ENCODE measurements at regions of chr9 and their contacts with region 1.

Region 1: DNA sequence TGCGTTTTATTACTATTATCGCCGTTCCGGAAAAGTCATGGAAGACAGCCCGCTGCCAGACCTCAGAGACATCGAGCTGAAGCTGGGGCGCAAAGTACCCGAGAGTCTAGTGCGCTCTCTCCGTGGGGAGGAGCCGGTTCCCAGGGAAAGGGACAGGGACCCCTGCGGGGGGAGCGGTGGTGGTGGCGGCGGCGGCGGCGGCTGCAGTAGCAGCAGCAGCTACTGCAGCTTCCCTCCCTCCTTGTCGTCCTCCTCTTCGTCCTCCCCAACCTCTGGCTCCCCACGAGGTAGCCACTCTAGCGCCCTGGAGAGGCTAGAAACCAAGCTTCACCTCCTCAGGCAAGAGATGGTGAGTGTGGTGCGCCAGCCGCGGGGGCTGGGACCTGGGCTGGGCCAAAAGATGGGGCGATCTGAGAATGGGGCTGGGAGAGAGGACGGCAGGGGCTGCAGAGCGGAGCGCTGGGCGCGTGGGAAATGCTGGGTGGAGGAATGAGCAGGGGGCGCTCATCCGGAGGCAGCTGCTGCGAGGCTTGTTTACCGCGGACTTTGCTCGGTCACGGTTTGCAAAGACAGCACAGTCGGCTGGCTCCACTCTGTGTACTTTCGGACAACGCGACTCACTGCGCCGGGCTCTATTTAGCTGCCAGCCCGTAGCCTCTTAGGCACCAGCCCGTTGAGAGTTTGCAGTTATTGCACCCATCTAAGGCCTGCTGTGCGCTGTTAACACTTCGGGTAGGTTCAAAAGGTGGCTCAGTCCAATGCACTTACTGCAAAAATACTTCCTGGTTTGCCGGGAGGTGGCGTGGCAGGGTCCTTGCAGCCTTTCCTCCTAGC is 1.1 kb downstream of the LURAP1L start:
- DNase-seq: peak; percentile 67
- H3K4me3 ChIP-seq: peak overlapping the region; percentile 76 to 89 (median 82)
- H3K27ac ChIP-seq: peak overlapping the region; percentile 89 to 97 (median 94)
- H3K4me1 ChIP-seq: peaks cover 0 to 38% (median 23%) of the 10 kb centered on the region in 4 donors
- H3K27me3 ChIP-seq: no peaks in the 10 kb centered on the region
- CTCF ChIP-seq: peak; percentile 48 to 59 (median 54)
- EP300 ChIP-seq: no peak
- POLR2A ChIP-seq: no peak

Region 2: DNA sequence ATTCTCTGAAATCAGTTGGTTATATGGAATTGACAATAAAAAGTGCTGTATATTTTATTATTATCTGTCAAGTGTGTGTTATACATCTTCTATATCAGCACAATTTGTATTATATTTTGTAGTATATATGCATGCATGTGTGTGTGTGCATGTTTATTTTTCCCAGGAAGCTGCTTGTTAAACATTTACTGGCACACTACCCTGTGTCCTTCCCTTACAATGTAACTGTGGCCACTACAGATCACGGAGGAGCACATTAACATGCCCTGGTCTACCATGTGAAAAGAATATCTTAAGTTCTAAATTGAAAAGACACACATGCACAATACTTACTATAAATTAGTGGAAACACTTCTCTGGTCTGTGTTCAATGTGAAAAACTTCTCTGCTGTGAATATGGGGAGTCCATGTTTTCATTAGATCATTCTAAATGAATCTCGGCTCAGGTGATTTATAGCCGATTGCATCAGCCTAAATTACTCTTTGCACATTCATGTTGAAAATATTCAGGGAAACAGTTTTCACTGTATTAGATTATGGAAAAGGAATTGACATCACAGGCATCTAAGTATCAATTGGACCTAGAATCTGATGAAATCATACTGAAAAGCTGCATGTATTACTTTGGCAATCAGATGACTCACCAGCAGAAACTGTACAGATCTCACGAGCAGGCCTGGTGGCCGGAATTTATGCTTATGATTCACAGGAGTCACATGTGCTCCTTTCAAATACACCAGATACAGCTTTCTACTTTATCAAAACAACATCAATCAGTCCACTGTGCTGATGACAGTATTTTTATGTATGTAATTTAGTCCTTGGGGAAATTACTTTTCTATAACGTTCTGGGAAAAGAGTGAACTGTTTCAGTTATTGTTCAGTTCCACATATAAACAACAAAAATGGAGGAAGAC is 38.3 kb after region 1 on chr9:
- intact Hi-C with region 1: loop called (anchors 2 kb)
- DNase-seq: peak; percentile 87
- H3K4me3 ChIP-seq: peak overlapping the region in 2 of 4 donors; percentile 8 to 11
- H3K27ac ChIP-seq: peak overlapping the region; percentile 73 to 85 (median 79)
- H3K4me1 ChIP-seq: peaks cover 0 to 94% (median 82%) of the 10 kb centered on the region in 4 donors
- H3K27me3 ChIP-seq: no peaks in the 10 kb centered on the region
- CTCF ChIP-seq: peak in 3 of 4 experiments; percentile 47 to 81 (median 50)
- EP300 ChIP-seq: peak in 3 of 4 donors; percentile 39 to 66 (median 51)
- POLR2A ChIP-seq: no peak

Region 3: DNA sequence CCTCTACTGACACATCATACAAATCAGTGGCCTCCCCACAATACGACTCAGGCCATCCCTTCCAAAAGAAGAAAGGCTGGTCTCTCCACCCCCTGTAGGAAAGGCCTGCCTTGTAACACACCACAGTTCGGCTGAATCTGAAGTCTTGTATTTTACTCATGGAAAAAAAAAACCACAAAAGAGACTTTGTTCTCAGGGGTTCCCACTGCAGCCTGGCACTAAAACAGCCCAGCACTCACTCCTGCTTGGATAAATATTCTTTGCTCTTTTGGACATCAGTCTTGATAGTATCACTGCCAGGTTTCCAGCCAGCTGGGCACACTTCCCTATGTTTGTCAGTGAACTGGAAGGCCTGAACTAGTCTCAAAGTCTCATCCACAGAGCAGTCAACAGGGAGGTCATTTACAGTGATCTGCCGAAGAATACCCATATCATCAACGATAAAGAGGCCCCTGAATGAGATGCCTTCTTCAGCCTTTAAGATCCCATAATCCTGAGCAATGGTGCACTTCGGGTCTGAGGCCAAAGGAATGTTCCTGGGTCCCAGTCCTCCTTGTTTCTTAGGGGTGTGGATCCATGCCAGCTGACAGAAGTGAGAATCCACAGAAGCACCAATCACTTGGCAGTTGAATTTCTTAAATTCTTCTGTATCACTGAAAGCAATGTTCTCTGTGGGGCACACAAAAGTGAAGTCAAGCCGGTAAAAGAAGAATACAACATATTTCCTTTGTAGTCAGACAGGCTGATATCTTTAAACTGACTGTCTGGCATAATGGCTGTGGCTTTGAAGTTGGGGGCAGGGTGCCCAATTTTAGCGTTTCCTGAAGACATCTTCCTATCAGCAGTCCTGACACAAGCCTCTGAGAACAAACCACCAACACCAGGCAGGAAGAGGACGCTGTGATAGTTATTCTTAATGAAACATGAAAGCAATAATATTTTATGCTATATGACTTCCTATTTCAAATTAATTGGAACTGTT is 197.0 kb after region 1 on chr9:
- intact Hi-C with region 1: loop called (anchors 5 kb)
- DNase-seq: peak; percentile 85
- H3K4me3 ChIP-seq: no peak overlapping the region
- H3K27ac ChIP-seq: peak overlapping the region; percentile 59 to 78 (median 74)
- H3K4me1 ChIP-seq: peaks cover 0 to 54% (median 32%) of the 10 kb centered on the region in 4 donors
- H3K27me3 ChIP-seq: no peaks in the 10 kb centered on the region
- CTCF ChIP-seq: no peak
- EP300 ChIP-seq: peak in 2 of 4 donors; percentile 1 to 31
- POLR2A ChIP-seq: no peak